ENCODE measurements at regions of chr16 and their contacts with region 1.

Region 1: DNA sequence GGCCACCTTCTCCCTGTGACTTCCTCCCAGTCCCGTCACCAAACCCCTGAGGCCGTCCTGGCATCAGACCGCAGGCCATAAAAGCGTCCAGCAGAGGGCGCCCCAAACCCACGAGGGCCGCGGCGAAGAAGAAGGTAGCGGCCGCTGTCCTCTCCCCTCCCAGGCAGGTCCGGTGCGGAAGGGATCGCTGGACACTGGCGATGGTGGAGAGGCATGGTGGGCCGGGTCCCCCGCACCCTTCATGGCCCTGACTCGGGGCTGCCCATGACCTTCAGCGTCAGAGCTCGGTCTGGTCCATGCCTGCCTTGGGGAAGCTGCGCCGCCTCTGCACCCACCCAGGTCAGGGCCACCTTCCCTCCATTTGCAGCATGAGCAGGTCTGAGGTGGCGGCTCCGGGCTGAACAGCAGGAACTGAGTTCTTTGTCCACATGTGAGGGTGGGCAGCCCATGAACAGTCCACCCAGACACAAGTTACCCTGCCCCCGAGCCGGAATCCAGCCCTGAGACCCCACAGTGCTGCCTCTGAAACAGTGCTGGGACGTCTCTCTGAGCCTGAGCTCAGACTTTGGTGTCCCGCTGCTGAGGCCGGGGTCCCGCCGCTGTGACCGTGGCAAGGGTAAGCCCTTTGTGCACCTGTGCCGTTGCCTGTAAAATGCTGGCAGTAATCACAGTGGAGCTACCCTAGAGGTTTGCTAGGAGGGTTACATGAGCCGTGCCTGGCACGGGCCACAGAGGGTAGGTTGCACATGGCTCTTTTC is 40.8 kb upstream of the CMIP start:
- DNase-seq: peak; percentile 89
- ATAC-seq: peak; percentile 56
- H3K4me3 ChIP-seq: no peak overlapping the region
- H3K27ac ChIP-seq: peak overlapping the region; percentile 99
- H3K4me1 ChIP-seq: peaks cover 48% of the 10 kb centered on the region
- H3K27me3 ChIP-seq: no peaks in the 10 kb centered on the region
- CTCF ChIP-seq: peak; percentile 80

Region 2: DNA sequence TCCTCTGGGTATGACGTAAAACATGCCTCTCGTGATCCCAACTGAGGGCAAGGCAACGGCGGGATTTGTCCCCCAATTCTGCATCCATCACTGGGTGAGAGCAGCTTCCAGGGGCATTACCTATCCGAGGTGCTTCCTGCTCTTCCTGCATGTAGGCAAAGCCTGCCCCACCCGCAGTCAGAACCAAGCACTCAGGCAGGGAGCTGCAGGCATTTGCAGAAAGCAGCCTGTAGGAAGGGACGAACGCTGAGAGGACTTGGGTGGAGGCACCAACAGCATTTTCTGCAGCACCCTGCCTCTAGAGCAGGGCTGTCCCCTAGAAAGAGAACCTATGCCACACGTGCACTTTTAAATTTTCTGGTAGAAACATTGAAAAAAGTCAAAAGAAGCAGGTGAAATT is 159.9 kb before region 1 on chr16:
- CTCF ChIA-PET with region 1: no interaction called
- POLR2A ChIA-PET with region 1: interaction called, 12 read pairs
- intact Hi-C with region 1: no loop called
- DNase-seq: no peak
- ATAC-seq: no peak
- H3K4me3 ChIP-seq: no peak overlapping the region
- H3K27ac ChIP-seq: no peak overlapping the region
- H3K4me1 ChIP-seq: no peaks in the 10 kb centered on the region
- H3K27me3 ChIP-seq: no peaks in the 10 kb centered on the region
- CTCF ChIP-seq: no peak

Region 3: GRCh38 chr16:81444448-81445121 is 40.8 kb after region 1 on chr16 and contains the start of gene CMIP:
- CTCF ChIA-PET with region 1: no interaction called
- POLR2A ChIA-PET with region 1: no interaction called
- intact Hi-C with region 1: loop called (anchors 2 kb)
- DNase-seq: peak; percentile 79
- ATAC-seq: peak; percentile 61
- H3K4me3 ChIP-seq: peak within 1 kb of the TSS; percentile 98
- H3K27ac ChIP-seq: peak within 1 kb of the TSS; percentile 83
- H3K4me1 ChIP-seq: peaks cover 23% of the 10 kb centered on the region
- H3K27me3 ChIP-seq: no peaks in the 10 kb centered on the region
- CTCF ChIP-seq: no peak
- total RNA-seq, gene CMIP: 25.7 and 43.7 TPM in 2 replicates

Region 4: DNA sequence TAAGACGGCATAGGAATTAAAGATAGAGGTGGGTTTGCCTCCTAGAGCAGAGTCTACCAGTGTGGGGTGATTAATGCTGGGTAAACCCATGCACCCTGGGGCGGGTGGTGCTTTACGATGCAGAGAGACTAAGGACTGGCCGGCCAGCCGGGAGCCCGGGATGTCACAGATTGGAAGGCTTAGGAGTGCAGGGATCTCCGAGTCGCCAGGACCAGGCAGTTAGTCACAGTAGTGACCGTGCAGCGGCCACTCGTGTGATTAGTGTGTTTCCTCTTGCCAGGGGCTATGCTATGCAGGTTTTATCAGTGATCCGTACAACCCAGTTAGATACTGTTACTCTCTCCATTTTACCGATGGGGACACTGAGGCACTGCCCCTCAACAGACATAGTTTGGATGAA is 51.2 kb after region 1 on chr16:
- CTCF ChIA-PET with region 1: no interaction called
- POLR2A ChIA-PET with region 1: no interaction called
- intact Hi-C with region 1: no loop called
- DNase-seq: no peak
- ATAC-seq: no peak
- H3K4me3 ChIP-seq: no peak overlapping the region
- H3K27ac ChIP-seq: no peak overlapping the region
- H3K4me1 ChIP-seq: peaks cover 6% of the 10 kb centered on the region
- H3K27me3 ChIP-seq: no peaks in the 10 kb centered on the region
- CTCF ChIP-seq: no peak

Region 5: GRCh38 chr16:81513204-81514040 is 109.6 kb after region 1 on chr16:
- CTCF ChIA-PET with region 1: no interaction called
- POLR2A ChIA-PET with region 1: no interaction called
- intact Hi-C with region 1: loop called (anchors 5 kb)
- DNase-seq: no peak
- ATAC-seq: no peak
- H3K4me3 ChIP-seq: no peak overlapping the region
- H3K27ac ChIP-seq: peak overlapping the region; percentile 19; the same call in 1 of the 2 replicates
- H3K4me1 ChIP-seq: peaks cover 54% of the 10 kb centered on the region
- H3K27me3 ChIP-seq: no peaks in the 10 kb centered on the region
- CTCF ChIP-seq: no peak

Region 6: DNA sequence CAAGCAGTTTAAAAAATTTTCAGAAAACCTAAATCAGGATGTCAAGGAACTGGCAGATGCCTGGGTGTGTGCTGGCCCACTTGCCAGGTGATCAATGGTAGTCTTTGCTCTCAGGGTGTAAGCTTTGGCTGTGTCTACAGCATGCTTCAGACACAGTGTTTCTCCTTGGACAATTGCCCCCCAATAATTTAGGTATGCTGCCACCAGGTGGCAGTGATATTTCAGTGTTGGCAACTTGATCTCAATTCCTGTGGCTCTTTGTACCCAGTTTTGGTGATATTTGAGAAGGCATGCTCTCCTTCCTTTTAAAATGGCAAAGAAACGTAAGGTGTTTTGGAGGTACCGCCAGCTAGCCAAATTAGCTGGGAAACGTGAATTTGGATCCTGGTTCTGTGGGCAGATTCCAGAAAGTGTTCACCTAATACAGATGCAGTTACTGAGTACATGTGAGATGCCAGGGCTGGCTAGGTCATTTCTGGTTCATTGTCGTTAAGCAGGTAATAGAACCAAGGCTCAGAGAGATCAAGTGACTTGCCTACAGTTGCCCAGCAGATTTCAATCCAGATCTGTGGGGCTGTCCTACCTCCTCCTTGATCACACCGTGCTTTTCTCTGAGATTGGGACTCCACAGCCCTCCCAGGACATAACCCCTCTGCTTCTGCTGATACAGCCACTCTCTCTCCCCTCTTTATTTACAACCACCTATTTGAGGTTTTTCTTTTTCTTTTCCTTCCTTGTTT is 219.7 kb after region 1 on chr16:
- CTCF ChIA-PET with region 1: no interaction called
- POLR2A ChIA-PET with region 1: no interaction called
- intact Hi-C with region 1: loop called (anchors 5 kb)
- DNase-seq: peak; percentile 54
- ATAC-seq: no peak
- H3K4me3 ChIP-seq: no peak overlapping the region
- H3K27ac ChIP-seq: no peak overlapping the region; the same call in 1 of the 2 replicates
- H3K4me1 ChIP-seq: peaks cover 17% of the 10 kb centered on the region
- H3K27me3 ChIP-seq: no peaks in the 10 kb centered on the region
- CTCF ChIP-seq: peak; percentile 69

Region 7: GRCh38 chr16:82882982-82883835 is 1479.4 kb after region 1 on chr16:
- CTCF ChIA-PET with region 1: no interaction called
- POLR2A ChIA-PET with region 1: no interaction called
- intact Hi-C with region 1: no loop called
- DNase-seq: no peak
- ATAC-seq: no peak
- H3K4me3 ChIP-seq: no peak overlapping the region
- H3K27ac ChIP-seq: no peak overlapping the region
- H3K4me1 ChIP-seq: no peaks in the 10 kb centered on the region
- H3K27me3 ChIP-seq: no peaks in the 10 kb centered on the region
- CTCF ChIP-seq: no peak